ENCODE measurements at regions of chr10 and their contacts with region 1.

Region 1: DNA sequence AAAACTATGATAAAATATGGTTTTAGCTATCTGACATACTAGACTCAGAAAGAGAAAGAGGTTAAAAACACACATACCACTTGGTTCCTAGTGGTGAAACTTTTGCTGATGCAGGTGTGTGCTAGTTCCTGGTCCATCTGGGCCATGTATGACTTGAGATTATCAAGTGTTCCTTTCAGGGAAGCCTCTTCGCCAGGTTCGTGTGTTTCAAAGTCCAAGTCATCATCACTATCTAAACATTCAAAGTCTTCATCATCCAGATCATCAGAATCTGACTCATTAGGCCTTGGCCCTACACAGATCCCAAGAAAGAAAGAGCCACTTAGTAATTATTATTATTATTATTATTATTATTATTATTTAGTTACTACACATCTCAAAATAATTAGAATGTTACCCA is 26.4 kb downstream of the NUDT13 start:
- DNase-seq: no peak
- H3K4me3 Mint-ChIP-seq: no peak overlapping the region
- H3K27ac Mint-ChIP-seq: no peak overlapping the region
- H3K4me1 Mint-ChIP-seq: peaks cover 2% of the 10 kb centered on the region
- H3K27me3 Mint-ChIP-seq: no peaks in the 10 kb centered on the region

Region 2: GRCh38 chr10:73159038-73159648 is 22.5 kb after region 1 on chr10:
- CTCF ChIA-PET with region 1: interaction called, 36 read pairs
- POLR2A ChIA-PET with region 1: no interaction called
- DNase-seq: peak; percentile 66
- H3K4me3 Mint-ChIP-seq: no peak overlapping the region
- H3K27ac Mint-ChIP-seq: no peak overlapping the region
- H3K4me1 Mint-ChIP-seq: peaks cover 33% of the 10 kb centered on the region
- H3K27me3 Mint-ChIP-seq: no peaks in the 10 kb centered on the region

Measured in activated CD4-positive, alpha-beta memory T cell treated with anti-CD3 and anti-CD28 coated beads, Interleukin-2, amount 10 ng/mL, durations not matched to agents 7 days and 5 days (primary cell).